ENCODE measurements at regions of chr6 and their contacts with region 1.

Region 1: DNA sequence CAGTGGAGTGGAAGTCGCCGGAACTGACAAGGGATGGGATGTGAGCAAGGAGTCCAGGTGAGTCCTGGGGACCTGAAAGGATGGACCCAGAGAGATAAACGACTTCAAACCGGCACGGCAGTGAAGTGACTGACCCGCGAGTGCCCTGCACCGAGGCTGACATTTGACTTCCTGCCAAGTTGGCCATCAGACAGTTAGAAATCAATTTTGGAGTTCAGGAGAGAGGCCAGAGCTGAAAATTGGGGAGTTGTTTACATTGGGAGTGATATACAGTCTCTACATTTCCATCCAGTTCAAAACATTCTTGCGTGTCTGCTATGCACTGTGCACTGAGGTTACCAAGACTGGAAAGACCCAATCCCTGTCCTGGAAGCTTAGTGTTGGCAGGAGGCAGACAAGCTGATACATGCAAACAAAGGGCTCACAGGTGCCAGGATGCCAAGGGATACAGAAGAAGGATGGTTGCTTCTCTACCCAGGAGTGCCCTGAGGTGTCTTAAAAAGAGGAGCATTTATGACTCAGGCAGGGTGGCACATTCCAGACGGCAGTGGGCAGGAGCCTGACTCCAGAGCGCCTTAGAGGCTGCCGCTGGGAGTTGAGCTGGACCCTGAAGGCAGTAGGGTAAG is 186.6 kb downstream of the MTHFD1L start:
- DNase-seq: peak; percentile 89
- H3K27ac ChIP-seq: peak overlapping the region; percentile 62
- CTCF ChIP-seq: no peak

Region 2: DNA sequence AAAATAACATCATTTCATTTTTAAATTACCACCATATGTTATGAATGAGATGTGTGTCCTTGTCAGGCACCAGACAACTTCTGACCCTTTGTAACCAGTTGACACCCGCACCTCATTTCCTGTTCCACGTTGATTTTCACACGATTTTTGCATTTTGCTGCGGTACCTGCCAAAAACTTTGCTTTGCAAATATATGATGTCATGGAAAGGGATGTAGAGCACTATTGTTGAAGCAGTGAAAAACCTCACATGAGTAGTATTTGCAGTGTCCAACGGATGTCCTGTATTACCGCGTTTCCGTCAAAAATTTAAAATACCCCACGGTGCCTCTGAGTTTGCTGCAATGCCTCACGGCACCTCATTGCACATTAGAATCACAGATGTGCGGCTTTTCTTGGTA is 71.0 kb before region 1 on chr6:
- CTCF ChIA-PET with region 1: no interaction called
- POLR2A ChIA-PET with region 1: no interaction called
- DNase-seq: no peak
- H3K27ac ChIP-seq: no peak overlapping the region
- CTCF ChIP-seq: no peak

Region 3: GRCh38 chr6:151067684-151068596 is 15.8 kb after region 1 on chr6:
- CTCF ChIA-PET with region 1: interaction called, 12 read pairs
- POLR2A ChIA-PET with region 1: no interaction called
- DNase-seq: peak; percentile 68
- H3K27ac ChIP-seq: peak overlapping the region; percentile 80
- CTCF ChIP-seq: no peak

Measured in RWPE1 (cell line).